ENCODE measurements at regions of chr20 and their contacts with region 1.

Region 1: DNA sequence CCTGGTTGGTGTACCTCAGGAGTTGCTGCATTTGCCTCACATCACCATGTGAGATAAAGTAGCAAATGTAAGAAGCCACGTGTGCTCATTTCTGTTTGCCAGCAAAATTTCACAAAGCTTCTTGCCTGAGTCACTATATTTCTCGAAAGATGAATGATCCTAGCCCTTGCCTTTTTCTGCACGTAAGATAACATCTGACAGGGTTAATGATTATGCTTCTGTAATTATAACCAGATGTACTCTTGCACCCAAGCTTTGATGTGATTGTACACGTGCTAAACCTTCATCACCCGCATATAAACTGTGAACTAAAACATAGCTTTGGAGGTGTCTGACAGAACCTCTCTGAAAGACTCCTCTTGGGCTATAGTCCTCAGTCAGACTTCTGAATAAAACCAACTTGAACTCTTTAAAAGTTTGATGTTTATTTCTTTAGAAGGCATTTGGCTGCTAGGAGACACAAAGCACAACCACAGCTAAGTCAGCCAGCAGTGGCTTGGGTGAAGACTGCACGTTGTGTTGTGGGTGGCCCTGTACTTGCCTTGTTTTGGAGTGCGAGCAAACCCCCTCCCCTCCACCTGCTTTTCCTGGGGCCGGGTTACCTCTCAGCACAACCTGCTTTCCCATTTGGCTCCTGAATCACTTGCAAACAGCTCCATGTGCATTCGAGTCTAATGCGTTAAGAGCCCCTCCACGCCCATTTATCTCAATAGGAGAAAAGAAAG is 19.3 kb downstream of the PROKR2 start:
- DNase-seq: no peak
- ATAC-seq: no peak
- H3K4me3 ChIP-seq: no peak overlapping the region
- H3K27ac ChIP-seq: no peak overlapping the region
- H3K4me1 ChIP-seq: no peaks in the 10 kb centered on the region
- H3K27me3 ChIP-seq: peaks cover 20% of the 10 kb centered on the region
- CTCF ChIP-seq: no peak

Region 2: DNA sequence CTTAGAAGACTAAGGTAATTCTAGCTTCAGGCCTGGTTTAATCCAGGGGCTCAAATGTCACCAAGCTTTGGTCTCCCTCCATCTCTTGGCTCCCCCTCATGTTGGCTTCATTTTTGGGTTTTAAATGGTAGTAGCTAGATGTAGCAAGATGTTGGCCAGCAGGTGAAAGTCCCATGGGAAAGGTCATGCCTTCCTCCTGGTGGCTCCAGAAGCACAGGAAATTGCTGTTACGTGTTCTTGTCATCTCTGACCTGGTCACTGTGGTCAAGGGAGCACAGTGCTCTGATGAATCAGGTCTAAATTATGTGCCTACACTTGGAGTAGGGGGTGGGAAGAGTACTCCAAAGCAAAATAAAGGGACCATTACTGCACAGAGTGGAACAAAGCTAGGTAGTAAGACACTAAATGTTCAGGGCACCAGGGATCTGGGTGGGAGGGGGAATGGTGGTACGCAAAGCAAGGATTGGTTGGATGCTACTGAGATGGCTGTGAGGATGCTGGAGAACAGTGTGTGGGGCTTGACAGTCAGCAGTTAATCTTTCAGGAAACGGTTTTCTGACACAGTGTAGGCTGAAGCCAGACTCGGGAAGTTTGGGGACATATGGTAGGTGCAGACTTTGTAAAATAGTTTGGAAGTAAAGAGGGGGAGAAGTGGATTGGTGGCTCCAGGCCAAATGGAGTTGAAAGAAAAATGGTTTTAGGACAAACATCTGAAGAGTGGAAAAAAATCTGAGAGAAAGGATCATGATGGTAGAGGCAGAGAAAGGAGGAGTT is 140.6 kb before region 1 on chr20:
- CTCF ChIA-PET with region 1: no interaction called
- POLR2A ChIA-PET with region 1: interaction called, 15 read pairs
- in situ Hi-C with region 1: no loop called
- intact Hi-C with region 1: no loop called
- DNase-seq: peak; percentile 25
- ATAC-seq: peak; percentile 77; the same call in 1 of the 2 replicates
- H3K4me3 ChIP-seq: no peak overlapping the region
- H3K27ac ChIP-seq: no peak overlapping the region
- H3K4me1 ChIP-seq: peaks cover 9% of the 10 kb centered on the region
- H3K27me3 ChIP-seq: no peaks in the 10 kb centered on the region
- CTCF ChIP-seq: no peak